Ovary (tissue), 10 donors: ENCODE measurements at regions of chr3 and their contacts with region 1.

Region 1: GRCh38 chr3:11379233-11379823 is 107.1 kb downstream of the ATG7 start:
- DNase-seq: no peak
- H3K4me3 ChIP-seq: no peak overlapping the region
- H3K27ac ChIP-seq: peak overlapping the region in 1 of 2 donors; percentile 67
- H3K4me1 ChIP-seq: peaks cover 4% of the 10 kb centered on the region
- H3K27me3 ChIP-seq: no peaks in the 10 kb centered on the region
- CTCF ChIP-seq: peak in 2 of 3 donors; percentile 65 to 84
- EP300 ChIP-seq: no peak
- POLR2A ChIP-seq: no peak

Region 2: GRCh38 chr3:11530153-11530721 is 150.9 kb after region 1 on chr3:
- intact Hi-C with region 1: no loop called
- DNase-seq: peak; percentile 65 to 76 (median 76)
- H3K4me3 ChIP-seq: no peak overlapping the region
- H3K27ac ChIP-seq: peak overlapping the region in 1 of 2 donors; percentile 71
- H3K4me1 ChIP-seq: peaks cover 25% of the 10 kb centered on the region
- H3K27me3 ChIP-seq: no peaks in the 10 kb centered on the region
- CTCF ChIP-seq: no peak
- EP300 ChIP-seq: no peak
- POLR2A ChIP-seq: no peak

Region 3: DNA sequence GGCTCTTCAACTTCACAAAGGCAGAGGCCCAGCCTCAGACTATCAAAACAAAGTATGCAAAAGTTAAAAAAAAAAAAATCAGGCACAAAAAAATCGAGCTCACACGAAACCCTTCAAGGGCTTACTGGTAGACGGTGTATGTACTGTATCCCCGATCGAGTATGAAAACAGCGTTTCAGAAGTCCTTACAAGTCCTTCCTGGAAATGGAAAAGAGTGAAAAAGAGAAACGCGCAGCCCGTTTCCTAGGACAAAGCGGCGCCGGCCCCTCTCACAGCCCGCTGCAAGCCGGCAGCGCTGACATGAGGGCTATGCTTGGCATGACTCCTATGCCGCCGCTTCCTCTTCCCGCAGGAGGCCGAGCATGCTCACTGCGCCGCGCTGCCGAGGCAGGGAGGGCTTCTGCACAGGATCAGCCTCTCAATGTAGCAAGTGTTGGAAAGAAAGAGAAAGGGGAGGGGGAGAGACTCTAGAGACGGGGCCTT is 264.3 kb after region 1 on chr3 and contains the start of gene VGLL4:
- intact Hi-C with region 1: loop called in 1 of 4 experiments (anchors 5 kb)
- DNase-seq: peak; percentile 88 to 92 (median 89)
- H3K4me3 ChIP-seq: peak within 1 kb of the TSS; percentile 42
- H3K27ac ChIP-seq: peak within 1 kb of the TSS; percentile 77 to 91
- H3K4me1 ChIP-seq: peaks cover 18% of the 10 kb centered on the region
- H3K27me3 ChIP-seq: no peaks in the 10 kb centered on the region
- CTCF ChIP-seq: no peak
- EP300 ChIP-seq: no peak
- POLR2A ChIP-seq: peak; percentile 53
- total RNA-seq, gene VGLL4: 80.5 to 120 (median 106) TPM

Region 4: GRCh38 chr3:11651900-11652299 is 272.6 kb after region 1 on chr3:
- intact Hi-C with region 1: loop called (anchors 5 kb)
- DNase-seq: no peak
- H3K4me3 ChIP-seq: no peak overlapping the region
- H3K27ac ChIP-seq: no peak overlapping the region
- H3K4me1 ChIP-seq: no peaks in the 10 kb centered on the region
- H3K27me3 ChIP-seq: no peaks in the 10 kb centered on the region
- CTCF ChIP-seq: peak in 2 of 3 donors; percentile 33 to 55
- EP300 ChIP-seq: no peak
- POLR2A ChIP-seq: no peak

Region 5: DNA sequence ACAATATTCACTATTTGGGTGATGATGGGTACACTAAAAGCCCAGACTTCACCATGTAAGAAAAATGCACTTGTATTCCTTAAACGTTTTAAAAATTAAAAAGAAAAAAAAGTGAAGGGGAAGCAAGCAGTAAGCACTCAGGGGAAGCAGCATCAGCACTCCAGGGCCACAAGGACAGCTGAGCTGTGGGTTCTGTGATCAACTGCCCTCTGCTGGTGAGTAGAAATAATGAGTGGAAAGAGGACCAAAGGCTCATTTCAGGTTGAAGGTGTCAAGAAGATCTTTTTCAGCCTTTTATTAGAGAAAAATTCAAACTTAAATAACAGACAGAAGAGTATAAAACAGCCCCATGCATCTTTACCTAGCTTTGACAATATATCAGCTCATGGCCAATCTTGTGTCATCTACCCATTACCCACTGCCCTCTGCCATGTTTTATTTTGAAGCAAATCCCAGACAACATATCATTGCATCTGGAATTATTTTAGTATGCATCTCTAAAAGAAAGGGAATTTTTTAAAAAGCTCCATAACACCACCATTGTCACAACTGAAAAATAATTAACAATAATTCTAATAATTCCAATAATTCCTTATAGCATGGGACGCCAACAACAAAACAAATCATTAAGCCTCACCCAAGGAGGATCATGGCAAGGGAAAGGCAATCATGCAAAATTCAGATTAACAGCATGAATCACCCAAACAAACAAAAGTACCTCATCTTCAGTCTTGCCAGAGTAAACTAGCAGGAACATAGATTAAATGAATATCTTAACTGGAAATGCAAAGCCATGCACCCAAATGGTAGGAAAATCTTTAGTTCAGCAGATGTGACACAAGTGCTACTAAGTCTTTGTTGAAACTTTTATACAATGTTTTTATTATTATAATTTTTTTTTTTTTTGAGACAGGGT is 424.9 kb after region 1 on chr3:
- intact Hi-C with region 1: loop called in 1 of 4 experiments (anchors 10 kb)
- DNase-seq: peak in 2 of 5 donors; percentile 35 to 39
- H3K4me3 ChIP-seq: no peak overlapping the region
- H3K27ac ChIP-seq: no peak overlapping the region
- H3K4me1 ChIP-seq: peaks cover 2% of the 10 kb centered on the region
- H3K27me3 ChIP-seq: no peaks in the 10 kb centered on the region
- CTCF ChIP-seq: peak; percentile 41 to 53 (median 41)
- EP300 ChIP-seq: no peak
- POLR2A ChIP-seq: no peak

Region 6: GRCh38 chr3:11826628-11827265 is 447.4 kb after region 1 on chr3:
- intact Hi-C with region 1: loop called in 3 of 4 experiments (anchors 5 to 10 kb)
- DNase-seq: no peak
- H3K4me3 ChIP-seq: no peak overlapping the region
- H3K27ac ChIP-seq: peak overlapping the region in 1 of 2 donors; percentile 28
- H3K4me1 ChIP-seq: peaks cover 5% of the 10 kb centered on the region
- H3K27me3 ChIP-seq: no peaks in the 10 kb centered on the region
- CTCF ChIP-seq: no peak
- EP300 ChIP-seq: no peak
- POLR2A ChIP-seq: no peak

Region 7: GRCh38 chr3:11835028-11835639 is 455.8 kb after region 1 on chr3:
- intact Hi-C with region 1: loop called in 3 of 4 experiments (anchors 5 to 10 kb)
- DNase-seq: no peak
- H3K4me3 ChIP-seq: no peak overlapping the region
- H3K27ac ChIP-seq: no peak overlapping the region
- H3K4me1 ChIP-seq: no peaks in the 10 kb centered on the region
- H3K27me3 ChIP-seq: no peaks in the 10 kb centered on the region
- CTCF ChIP-seq: peak; percentile 26 to 38 (median 32)
- EP300 ChIP-seq: no peak
- POLR2A ChIP-seq: no peak